Ovary (tissue), 10 donors: ENCODE measurements at regions of chr2 and their contacts with region 1.

Region 1: GRCh38 chr2:230987137-230988020 is 8.5 kb upstream of the SPATA3 start:
- DNase-seq: peak; percentile 68 to 88 (median 78)
- H3K4me3 ChIP-seq: peak overlapping the region; percentile 33
- H3K27ac ChIP-seq: no peak overlapping the region
- H3K4me1 ChIP-seq: no peaks in the 10 kb centered on the region
- H3K27me3 ChIP-seq: no peaks in the 10 kb centered on the region
- CTCF ChIP-seq: peak; percentile 77 to 94 (median 84)
- EP300 ChIP-seq: no peak
- POLR2A ChIP-seq: no peak

Region 2: GRCh38 chr2:230824406-230824978 is 162.9 kb before region 1 on chr2:
- intact Hi-C with region 1: loop called (anchors 5 kb)
- DNase-seq: peak; percentile 28 to 50 (median 46)
- H3K4me3 ChIP-seq: no peak overlapping the region
- H3K27ac ChIP-seq: no peak overlapping the region
- H3K4me1 ChIP-seq: no peaks in the 10 kb centered on the region
- H3K27me3 ChIP-seq: no peaks in the 10 kb centered on the region
- CTCF ChIP-seq: peak; percentile 33 to 69 (median 56)
- EP300 ChIP-seq: no peak
- POLR2A ChIP-seq: no peak

Region 3: DNA sequence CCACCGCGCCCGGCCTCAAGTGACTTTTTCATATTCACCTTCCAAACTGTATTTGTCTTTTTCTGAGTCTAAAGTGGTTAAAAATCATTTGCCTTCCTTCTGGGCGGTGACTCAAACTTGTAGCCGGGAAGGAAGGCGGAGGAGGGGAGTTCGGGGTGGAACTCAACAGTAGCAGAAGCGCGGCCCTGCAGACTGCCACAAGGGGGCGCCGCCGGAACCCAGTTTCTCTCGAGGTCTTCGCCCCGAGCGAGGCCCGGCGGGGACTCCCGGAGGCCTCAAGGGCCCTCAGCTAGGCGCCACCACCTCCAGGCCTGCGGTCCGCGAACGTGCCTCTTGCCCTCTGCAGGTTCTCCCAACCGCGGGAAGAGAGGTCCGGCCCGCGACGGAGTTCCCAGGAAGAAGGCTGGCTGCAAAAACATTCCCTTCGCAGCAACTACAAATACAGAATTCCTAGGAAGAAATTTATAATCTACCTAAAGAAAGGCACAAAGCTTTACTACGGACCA is 139.4 kb before region 1 on chr2:
- intact Hi-C with region 1: loop called in 1 of 4 experiments (anchors 5 kb)
- DNase-seq: peak; percentile 64 to 89 (median 79)
- H3K4me3 ChIP-seq: no peak overlapping the region
- H3K27ac ChIP-seq: no peak overlapping the region
- H3K4me1 ChIP-seq: no peaks in the 10 kb centered on the region
- H3K27me3 ChIP-seq: no peaks in the 10 kb centered on the region
- CTCF ChIP-seq: peak; percentile 46 to 67 (median 53)
- EP300 ChIP-seq: no peak
- POLR2A ChIP-seq: no peak

Region 4: GRCh38 chr2:230902180-230902899 is 85.0 kb before region 1 on chr2:
- intact Hi-C with region 1: loop called in 2 of 4 experiments (anchors 5 to 10 kb)
- DNase-seq: peak in 2 of 5 donors; percentile 5 to 27
- H3K4me3 ChIP-seq: no peak overlapping the region
- H3K27ac ChIP-seq: no peak overlapping the region
- H3K4me1 ChIP-seq: no peaks in the 10 kb centered on the region
- H3K27me3 ChIP-seq: no peaks in the 10 kb centered on the region
- CTCF ChIP-seq: no peak
- EP300 ChIP-seq: no peak
- POLR2A ChIP-seq: no peak